Activated CD4-positive, alpha-beta memory T cell treated with anti-CD3 and anti-CD28 coated beads for 36 hours (primary cell): ENCODE measurements at regions of chr12 and their contacts with region 1.

Region 1: DNA sequence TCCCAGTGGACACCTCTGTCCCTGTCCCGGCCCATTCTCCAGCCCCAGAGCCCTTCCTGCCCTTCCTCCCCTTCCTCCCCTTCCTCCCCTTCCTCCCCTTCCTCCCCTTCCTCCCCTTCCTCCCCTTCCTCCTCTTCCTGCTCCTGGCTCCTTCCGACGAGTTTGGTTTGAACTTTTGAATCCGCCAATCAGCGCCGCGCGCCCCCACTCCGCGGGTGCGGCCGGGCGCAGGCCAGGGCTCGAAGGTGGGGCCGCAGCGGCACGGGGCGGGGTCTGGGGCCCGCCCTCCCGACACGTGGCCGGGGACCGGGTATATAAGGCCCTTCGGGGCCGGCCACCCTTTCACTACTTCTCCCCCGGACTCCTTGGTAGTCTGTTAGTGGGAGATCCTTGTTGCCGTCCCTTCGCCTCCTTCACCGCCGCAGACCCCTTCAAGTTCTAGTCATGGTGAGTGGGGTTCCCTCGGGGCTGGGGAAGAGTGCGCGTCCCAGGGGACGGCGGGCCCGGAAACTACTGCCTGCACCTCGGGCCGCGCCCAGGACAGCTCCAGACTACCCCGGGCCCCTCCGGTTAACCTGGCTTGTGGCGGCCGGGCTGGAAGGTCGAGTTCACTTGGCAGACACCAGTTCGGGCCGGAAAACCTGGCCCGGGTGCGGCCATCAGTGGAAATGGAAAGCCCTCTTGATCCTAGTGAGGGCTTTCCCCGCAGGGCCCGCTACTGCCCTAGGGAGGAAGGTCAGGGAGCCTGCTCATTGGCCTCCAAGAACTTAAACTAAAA is at the start of gene TUBA1C:
- DNase-seq: peak; percentile 93
- H3K4me3 Mint-ChIP-seq: peak within 1 kb of the TSS; percentile 99
- H3K27ac Mint-ChIP-seq: peak within 1 kb of the TSS; percentile 99
- H3K4me1 Mint-ChIP-seq: peaks cover 47% of the 10 kb centered on the region
- H3K27me3 Mint-ChIP-seq: no peaks in the 10 kb centered on the region
- total RNA-seq, gene TUBA1C: 353 to 360 TPM

Region 2: GRCh38 chr12:48917857-48918537 is 346.9 kb before region 1 on chr12:
- CTCF ChIA-PET with region 1: no interaction called
- POLR2A ChIA-PET with region 1: no interaction called
- intact Hi-C with region 1: no loop called
- DNase-seq: peak; percentile 53
- H3K4me3 Mint-ChIP-seq: peak overlapping the region; percentile 23
- H3K27ac Mint-ChIP-seq: peak overlapping the region; percentile 74
- H3K4me1 Mint-ChIP-seq: peaks cover 39% of the 10 kb centered on the region
- H3K27me3 Mint-ChIP-seq: no peaks in the 10 kb centered on the region

Region 3: DNA sequence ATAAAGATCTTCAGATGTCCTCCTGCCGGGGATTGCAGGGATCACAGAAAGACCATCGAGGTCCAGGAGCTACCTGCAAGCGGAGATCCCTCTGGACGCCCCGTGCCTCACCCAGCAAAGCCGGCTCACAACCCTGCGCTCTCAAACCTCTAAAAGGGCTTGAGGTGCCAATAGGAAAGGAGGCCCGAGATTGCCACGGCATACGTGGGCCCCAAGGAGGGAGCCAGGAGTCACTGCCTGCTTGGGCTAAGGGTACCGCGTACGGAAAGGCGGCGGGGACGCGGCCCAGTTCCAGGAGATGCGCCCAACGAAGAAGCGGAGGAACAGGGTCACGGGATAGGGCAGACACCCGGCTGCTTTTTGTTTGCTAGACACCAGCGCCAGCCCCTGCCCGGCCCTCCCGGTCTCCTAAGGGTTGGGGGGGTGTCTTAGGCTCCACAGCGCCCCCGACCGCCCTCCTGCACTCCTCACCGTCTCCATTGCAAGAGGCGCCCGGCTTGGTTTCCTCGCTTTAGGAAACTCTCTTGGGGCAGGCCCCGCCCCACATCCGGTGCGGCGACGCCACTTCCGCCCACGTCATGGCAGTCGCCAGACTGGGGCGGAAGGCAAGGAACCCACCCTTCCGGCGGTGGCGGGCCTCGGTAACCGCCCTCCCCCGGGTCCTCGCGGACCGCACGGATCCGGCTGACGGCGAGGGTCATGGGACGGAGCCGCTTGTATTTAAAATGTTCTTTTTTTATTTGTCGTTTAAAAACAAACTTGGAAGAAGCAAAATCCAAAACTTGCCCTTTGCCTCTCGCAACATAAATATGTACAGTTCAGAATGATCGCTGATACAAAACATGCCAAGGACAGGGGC is 246.4 kb before region 1 on chr12 and contains the start of gene PRKAG1:
- CTCF ChIA-PET with region 1: no interaction called
- POLR2A ChIA-PET with region 1: interaction called, 3 read pairs
- intact Hi-C with region 1: loop called (anchors 5 kb)
- DNase-seq: peak; percentile 97
- H3K4me3 Mint-ChIP-seq: peak within 1 kb of the TSS; percentile 95
- H3K27ac Mint-ChIP-seq: peak within 1 kb of the TSS; percentile 92
- H3K4me1 Mint-ChIP-seq: peaks cover 40% of the 10 kb centered on the region
- H3K27me3 Mint-ChIP-seq: no peaks in the 10 kb centered on the region
- total RNA-seq, gene PRKAG1: 52.0 to 55.8 TPM

Region 4: GRCh38 chr12:49110464-49111155 is 154.3 kb before region 1 on chr12 and contains the start of gene LMBR1L:
- CTCF ChIA-PET with region 1: no interaction called
- POLR2A ChIA-PET with region 1: no interaction called
- intact Hi-C with region 1: loop called (anchors 1 kb)
- DNase-seq: peak; percentile 97
- H3K4me3 Mint-ChIP-seq: peak within 1 kb of the TSS; percentile 95
- H3K27ac Mint-ChIP-seq: peak within 1 kb of the TSS; percentile 80
- H3K4me1 Mint-ChIP-seq: peaks cover 24% of the 10 kb centered on the region
- H3K27me3 Mint-ChIP-seq: no peaks in the 10 kb centered on the region
- total RNA-seq, gene LMBR1L: 55.0 to 59.1 TPM

Region 5: DNA sequence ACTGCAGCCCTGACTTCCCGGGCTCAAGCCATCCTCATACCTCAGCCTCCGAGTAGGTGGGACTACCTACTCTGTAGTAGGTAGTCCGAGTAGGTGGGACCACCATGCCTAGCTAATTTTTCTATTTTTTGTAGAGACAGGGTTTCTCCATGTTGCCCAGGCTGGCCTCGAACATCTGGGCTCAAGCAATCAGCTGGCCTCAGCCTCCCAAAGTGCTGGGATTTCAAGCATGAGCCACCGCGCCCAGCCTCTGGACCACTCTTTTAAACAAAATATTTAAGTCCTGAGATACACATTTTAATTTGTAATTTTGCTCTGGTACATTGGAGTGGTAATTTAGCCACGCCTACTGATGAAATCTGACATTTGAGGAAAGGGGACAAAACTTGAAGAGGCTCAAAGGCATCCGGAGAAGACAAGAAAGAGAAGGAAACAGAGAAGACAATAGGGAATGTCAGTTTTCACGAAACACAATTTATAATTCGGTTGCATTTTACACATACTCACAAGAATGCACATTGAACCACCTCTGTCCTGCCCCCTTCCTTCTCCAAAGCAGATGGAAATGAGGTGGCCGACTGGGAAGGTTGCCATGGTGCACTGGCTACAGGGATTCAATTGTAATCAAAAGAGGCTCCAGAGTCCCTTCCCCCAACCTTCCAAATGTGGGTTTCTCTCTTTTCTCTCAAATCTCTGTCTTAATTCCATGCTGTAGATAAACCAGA is 66.3 kb before region 1 on chr12:
- CTCF ChIA-PET with region 1: no interaction called
- POLR2A ChIA-PET with region 1: no interaction called
- intact Hi-C with region 1: no loop called
- DNase-seq: no peak
- H3K4me3 Mint-ChIP-seq: no peak overlapping the region
- H3K27ac Mint-ChIP-seq: no peak overlapping the region
- H3K4me1 Mint-ChIP-seq: peaks cover 11% of the 10 kb centered on the region
- H3K27me3 Mint-ChIP-seq: peaks cover 2% of the 10 kb centered on the region

Region 6: GRCh38 chr12:49232940-49233841 is 31.7 kb before region 1 on chr12:
- CTCF ChIA-PET with region 1: interaction called, 15 read pairs
- POLR2A ChIA-PET with region 1: interaction called, 4 read pairs
- intact Hi-C with region 1: loop called (anchors 2 kb)
- DNase-seq: no peak
- H3K4me3 Mint-ChIP-seq: no peak overlapping the region
- H3K27ac Mint-ChIP-seq: no peak overlapping the region
- H3K4me1 Mint-ChIP-seq: peaks cover 16% of the 10 kb centered on the region
- H3K27me3 Mint-ChIP-seq: no peaks in the 10 kb centered on the region

Region 7: GRCh38 chr12:49253088-49253487 is 11.8 kb before region 1 on chr12:
- CTCF ChIA-PET with region 1: no interaction called
- POLR2A ChIA-PET with region 1: interaction called, 10 read pairs
- intact Hi-C with region 1: no loop called
- DNase-seq: no peak
- H3K4me3 Mint-ChIP-seq: no peak overlapping the region
- H3K27ac Mint-ChIP-seq: no peak overlapping the region
- H3K4me1 Mint-ChIP-seq: peaks cover 12% of the 10 kb centered on the region
- H3K27me3 Mint-ChIP-seq: no peaks in the 10 kb centered on the region